Lower leg skin (tissue), 4 donors: ENCODE measurements at regions of chr1 and their contacts with region 1.

Region 1: GRCh38 chr1:37776946-37777516 is 12.1 kb upstream of the EPHA10 start:
- DNase-seq: no peak
- H3K4me3 ChIP-seq: no peak overlapping the region
- CTCF ChIP-seq: no peak
- POLR2A ChIP-seq: no peak

Region 2: GRCh38 chr1:37793773-37794371 is 16.8 kb after region 1 on chr1 and contains the start of gene MANEAL:
- intact Hi-C with region 1: loop called (anchors 2 kb)
- DNase-seq: no peak
- H3K4me3 ChIP-seq: peak within 1 kb of the TSS; percentile 27
- CTCF ChIP-seq: no peak
- POLR2A ChIP-seq: no peak
- total RNA-seq, gene MANEAL: 5.0 to 6.7 (median 6.3) TPM